Pancreas (tissue), 10 donors: ENCODE measurements at regions of chr2 and their contacts with region 1.

Region 1: DNA sequence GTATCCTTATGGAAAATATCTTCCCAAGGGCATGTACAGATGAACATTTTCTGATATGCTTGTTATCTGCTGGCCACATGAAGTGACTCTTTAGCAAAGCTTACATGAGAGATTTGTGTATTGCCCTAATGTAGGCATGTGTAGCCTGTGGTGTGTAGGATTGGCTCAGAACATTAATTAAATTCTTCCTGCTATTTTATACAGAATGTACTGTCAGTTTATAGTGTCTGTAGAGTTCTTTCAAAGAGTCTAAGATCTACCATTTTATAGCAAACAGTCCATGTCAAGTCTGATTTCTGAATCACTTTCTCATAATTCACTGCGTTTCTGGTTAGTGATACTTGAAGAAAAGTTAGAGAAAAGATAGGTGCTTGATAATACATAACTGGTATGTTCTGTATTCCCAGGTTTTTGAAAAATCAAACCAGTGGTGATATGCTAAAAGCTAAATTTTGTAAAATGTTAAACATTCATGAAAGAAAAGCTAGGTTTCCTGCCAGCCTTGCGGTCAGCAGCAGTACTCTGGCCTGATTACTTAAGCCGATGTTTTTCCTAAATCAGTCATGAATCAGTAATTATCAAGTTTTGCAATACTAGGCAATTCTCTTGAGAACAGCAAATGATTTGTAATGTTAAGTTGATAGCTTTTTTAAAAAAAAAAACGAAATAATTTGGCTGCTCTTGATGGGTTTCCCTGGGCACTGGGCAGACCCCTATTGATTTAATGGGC is 30.9 kb upstream of the EFEMP1 start:
- DNase-seq: no peak
- ATAC-seq: peak in 3 of 4 donors; percentile 18 to 33 (median 29)
- H3K4me3 ChIP-seq: no peak overlapping the region
- H3K27ac ChIP-seq: no peak overlapping the region
- H3K4me1 ChIP-seq: peaks cover 0 to 3% (median 0%) of the 10 kb centered on the region in 3 donors
- H3K27me3 ChIP-seq: no peaks in the 10 kb centered on the region
- CTCF ChIP-seq: no peak

Region 2: DNA sequence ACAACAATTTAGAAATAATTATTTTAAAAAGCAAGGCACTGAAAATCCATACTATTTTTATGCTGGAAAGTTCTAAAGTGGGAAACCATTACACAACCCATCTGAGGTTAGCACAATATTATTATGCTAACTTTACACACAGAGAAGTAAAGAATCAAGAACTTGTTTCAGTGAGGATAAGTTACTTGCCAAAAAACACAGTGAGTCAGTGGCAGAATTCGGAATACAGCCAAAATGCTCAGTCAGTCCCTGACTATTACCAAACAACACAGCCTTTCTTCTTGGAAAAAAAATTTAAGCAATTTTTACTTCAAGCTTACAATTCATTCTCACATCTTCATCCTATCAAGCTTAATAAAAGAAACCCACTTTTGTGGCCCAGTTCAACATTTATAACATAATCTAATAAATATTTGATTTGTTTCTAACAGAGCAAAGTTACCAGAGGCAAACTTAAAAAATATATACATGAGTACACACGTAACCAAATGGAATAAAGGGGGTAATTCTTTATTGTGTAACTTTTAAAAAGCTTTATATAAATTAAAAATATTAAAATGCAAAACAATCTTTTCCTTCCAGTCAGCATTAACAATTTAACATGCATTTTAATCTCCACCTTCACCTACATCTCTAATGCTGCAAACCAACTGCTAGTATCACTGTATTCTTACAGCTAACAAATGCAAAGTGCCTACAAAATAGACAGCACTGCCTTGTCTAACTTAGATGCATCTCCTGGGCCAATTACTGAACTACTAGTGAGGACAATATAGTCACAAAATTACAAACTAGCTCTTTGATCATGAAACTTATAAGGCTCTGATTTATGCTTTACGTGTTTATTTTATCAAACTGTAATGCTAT is 590.0 kb before region 1 on chr2:
- intact Hi-C with region 1: no loop called
- DNase-seq: peak in 3 of 6 donors; percentile 67 to 74 (median 68)
- ATAC-seq: peak; percentile 98 to 100 (median 99)
- H3K4me3 ChIP-seq: no peak overlapping the region
- H3K27ac ChIP-seq: peak overlapping the region in 2 of 4 donors; percentile 47 to 48
- H3K4me1 ChIP-seq: peaks cover 0 to 16% (median 15%) of the 10 kb centered on the region in 3 donors
- H3K27me3 ChIP-seq: no peaks in the 10 kb centered on the region
- CTCF ChIP-seq: no peak

Region 3: DNA sequence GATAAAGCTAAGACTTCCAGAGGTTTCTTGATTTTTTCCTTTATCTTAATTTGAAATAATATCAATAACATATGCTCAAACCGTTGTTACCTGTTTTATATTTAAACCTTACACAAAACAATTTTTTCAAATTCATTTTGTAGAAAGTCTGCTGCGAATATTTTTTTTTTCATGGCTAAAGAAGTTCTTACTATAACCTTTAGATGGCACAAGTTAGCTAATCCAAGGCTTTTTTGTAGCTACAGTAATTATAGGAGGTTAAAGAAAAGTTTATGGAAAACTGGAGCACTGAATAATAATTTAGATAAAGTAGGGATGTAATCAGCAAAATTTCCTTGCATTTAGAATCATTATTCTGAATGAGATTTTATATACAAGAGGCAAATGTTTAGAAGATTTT is 182.9 kb before region 1 on chr2:
- intact Hi-C with region 1: loop called in 1 of 3 experiments (anchors 10 kb)
- DNase-seq: no peak
- ATAC-seq: peak; percentile 63 to 85 (median 80)
- H3K4me3 ChIP-seq: no peak overlapping the region
- H3K27ac ChIP-seq: no peak overlapping the region
- H3K4me1 ChIP-seq: peaks cover 0 to 7% (median 0%) of the 10 kb centered on the region in 3 donors
- H3K27me3 ChIP-seq: no peaks in the 10 kb centered on the region
- CTCF ChIP-seq: peak in 3 of 4 donors; percentile 51 to 61 (median 57)